ENCODE measurements at regions of chr13 and their contacts with region 1.

Region 1: GRCh38 chr13:26186118-26186870 is 35.8 kb downstream of the RNF6 start:
- DNase-seq: peak; percentile 89

Region 2: DNA sequence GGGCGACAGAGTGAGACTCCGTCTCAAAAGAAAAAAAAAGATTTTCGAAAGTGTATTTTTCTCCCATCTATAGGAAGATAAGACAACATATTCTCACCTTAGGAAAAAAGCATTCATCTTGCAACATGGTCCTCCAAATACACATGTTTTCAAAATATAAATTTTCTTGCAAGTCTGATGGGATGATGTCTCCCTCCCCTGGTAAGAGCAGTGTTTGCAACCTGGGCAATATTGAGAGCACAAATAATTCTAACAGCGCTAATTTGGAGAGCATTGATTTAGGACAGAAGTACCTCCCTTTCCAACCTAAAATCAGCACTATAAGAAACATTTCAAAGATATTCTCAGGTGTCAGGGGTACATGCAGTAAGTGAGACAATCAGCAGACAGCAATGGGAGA is 73.5 kb before region 1 on chr13:
- intact Hi-C with region 1: no loop called
- DNase-seq: no peak

Region 3: GRCh38 chr13:26253787-26254582 is 67.7 kb after region 1 on chr13 and contains the start of gene CDK8:
- intact Hi-C with region 1: loop called (anchors 10 kb)
- DNase-seq: peak; percentile 94
- total RNA-seq, gene CDK8: 12.4 TPM

Region 4: DNA sequence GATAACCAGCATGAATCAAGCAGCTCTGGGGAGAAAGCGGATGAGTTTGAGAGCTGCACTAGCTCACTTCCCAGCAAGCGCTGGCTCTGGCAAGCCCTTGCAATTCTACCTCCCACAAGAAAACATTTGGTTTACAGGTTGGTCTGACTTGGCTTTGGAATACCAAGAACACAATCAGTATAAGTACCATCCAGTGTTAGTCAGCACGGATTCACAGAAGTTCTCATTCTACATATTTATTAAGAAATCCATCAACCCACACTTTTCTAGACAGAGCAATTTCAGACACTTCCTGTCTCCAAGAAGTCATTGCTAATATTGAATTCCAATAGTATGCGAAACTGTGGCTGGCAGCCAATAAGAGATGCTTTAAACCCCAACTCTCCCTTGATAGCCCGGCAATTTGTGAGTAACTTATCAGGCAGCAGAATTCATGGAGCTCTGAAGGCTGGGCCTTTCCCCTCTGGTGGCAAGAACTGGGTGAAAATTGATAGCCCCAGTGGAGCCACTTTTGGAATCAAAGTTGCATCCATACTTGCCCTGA is 311.7 kb after region 1 on chr13:
- intact Hi-C with region 1: loop called (anchors 2 kb)
- DNase-seq: no peak

Region 5: DNA sequence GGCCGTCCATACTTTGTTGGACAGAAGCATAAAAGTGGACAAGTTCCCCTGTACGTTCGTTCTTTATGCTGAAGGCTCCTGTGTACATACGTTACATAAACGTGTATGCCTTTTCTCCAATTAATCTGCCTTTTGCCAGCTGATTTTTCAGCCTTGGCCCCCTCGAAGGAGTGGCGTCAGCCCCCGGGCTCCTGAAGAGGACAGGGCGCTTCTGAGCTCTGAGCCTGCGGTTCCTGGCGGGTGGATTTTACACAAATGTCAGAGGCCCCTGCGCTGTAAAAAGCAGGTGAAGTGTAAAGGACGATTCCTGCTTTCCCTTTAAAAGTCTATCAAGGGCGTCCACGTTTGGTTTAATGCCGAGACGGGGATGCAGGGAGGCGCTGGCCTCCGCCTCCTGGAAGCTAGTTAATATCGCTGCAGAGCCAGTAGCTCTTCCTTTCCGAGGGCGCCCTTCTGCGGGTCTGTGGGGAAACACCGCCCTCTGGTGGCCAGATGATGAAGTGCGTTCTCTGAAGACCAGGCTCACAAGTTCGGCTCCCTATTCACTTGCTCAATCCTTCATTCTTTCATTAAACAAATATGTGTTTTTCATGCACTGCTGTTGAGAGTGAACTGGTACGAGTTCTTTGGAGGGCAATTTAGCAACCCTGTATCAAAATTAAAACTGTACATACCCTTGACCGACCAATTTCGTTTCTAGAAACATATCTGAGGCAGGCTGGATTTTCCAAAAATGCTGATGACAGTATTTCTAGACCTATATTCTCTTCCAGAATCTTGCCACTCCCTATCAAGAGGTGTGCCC is 512.3 kb after region 1 on chr13:
- intact Hi-C with region 1: loop called (anchors 2 kb)
- DNase-seq: peak; percentile 88